Activated CD4-positive, alpha-beta T cell treated with anti-CD3 and anti-CD28 coated beads, Interleukin-2, amount 10 ng/mL, durations not matched to agents 7 days and 5 days (primary cell): ENCODE measurements at regions of chr17 and their contacts with region 1.

Region 1: DNA sequence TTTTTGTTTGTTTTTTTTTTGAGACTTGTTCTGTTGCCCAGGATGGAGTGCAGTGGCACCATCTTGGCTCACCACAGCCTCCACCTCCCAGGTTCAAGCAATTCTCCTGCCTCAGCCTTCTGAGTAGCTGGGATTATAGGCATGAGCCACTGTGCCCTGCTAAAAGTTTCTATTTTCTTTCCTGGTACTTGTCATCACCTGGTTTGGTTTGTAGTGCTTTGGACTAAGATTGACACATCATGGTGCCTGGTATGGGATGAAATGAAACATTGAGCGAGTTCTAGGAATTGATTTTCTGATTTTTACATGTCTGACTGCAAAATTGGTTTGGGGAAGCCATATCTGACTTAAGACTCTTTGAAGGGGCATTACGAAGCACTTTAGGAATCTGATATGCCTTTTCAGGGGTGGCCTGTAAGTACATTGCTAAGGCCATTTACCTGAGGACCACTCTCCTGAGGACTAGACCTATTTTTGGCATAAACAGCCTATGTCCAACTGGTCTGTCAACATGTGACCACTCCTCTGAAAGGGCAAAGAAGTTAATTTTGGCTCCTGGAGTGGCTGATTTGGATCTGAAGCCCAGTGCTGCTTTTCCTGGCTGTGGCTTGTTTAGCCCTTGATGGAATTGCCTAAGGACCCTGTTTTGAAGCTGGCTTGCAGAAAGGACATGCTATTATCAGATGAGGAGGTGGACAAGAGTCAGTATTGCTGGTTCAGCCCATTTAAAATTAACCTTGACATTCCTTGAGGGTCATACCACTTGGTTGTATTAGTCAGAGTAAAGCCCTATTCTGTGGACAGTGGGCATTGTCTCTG is 18.4 kb upstream of the TBKBP1 start:
- DNase-seq: no peak
- H3K4me3 Mint-ChIP-seq: no peak overlapping the region
- H3K27ac Mint-ChIP-seq: no peak overlapping the region
- H3K4me1 Mint-ChIP-seq: peaks cover 42% of the 10 kb centered on the region
- H3K27me3 Mint-ChIP-seq: no peaks in the 10 kb centered on the region

Region 2: GRCh38 chr17:47663912-47664625 is 11.5 kb before region 1 on chr17:
- CTCF ChIA-PET with region 1: interaction called, 17 read pairs
- POLR2A ChIA-PET with region 1: interaction called, 4 read pairs
- DNase-seq: peak; percentile 75
- H3K4me3 Mint-ChIP-seq: no peak overlapping the region
- H3K27ac Mint-ChIP-seq: peak overlapping the region; percentile 74
- H3K4me1 Mint-ChIP-seq: peaks cover 44% of the 10 kb centered on the region
- H3K27me3 Mint-ChIP-seq: no peaks in the 10 kb centered on the region